ENCODE measurements at regions of chr14 and their contacts with region 1.

Region 1: DNA sequence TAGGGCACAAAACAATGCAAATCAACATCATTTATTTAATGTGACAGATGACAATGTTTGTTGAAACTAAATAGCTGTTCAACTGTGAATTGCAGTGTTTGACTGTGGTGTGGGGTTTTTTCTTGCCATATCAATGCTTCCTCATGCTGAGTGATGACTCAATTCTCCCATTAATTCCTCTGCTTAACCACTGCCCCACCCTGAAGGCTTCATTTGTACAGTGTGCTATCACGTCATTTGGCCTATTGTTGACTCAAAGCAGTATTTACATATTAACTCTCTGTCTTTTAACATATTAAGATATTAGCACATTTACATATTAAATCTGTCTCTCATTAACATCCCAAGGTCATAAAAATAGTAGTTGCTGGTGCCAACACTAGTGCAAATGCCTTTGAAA is 164.8 kb upstream of the NRXN3 start:
- DNase-seq: peak; percentile 67
- H3K4me3 Mint-ChIP-seq: no peak overlapping the region
- H3K27ac Mint-ChIP-seq: peak overlapping the region; percentile 93
- H3K4me1 Mint-ChIP-seq: peaks cover 29% of the 10 kb centered on the region
- H3K27me3 Mint-ChIP-seq: no peaks in the 10 kb centered on the region
- CTCF ChIP-seq: no peak

Region 2: DNA sequence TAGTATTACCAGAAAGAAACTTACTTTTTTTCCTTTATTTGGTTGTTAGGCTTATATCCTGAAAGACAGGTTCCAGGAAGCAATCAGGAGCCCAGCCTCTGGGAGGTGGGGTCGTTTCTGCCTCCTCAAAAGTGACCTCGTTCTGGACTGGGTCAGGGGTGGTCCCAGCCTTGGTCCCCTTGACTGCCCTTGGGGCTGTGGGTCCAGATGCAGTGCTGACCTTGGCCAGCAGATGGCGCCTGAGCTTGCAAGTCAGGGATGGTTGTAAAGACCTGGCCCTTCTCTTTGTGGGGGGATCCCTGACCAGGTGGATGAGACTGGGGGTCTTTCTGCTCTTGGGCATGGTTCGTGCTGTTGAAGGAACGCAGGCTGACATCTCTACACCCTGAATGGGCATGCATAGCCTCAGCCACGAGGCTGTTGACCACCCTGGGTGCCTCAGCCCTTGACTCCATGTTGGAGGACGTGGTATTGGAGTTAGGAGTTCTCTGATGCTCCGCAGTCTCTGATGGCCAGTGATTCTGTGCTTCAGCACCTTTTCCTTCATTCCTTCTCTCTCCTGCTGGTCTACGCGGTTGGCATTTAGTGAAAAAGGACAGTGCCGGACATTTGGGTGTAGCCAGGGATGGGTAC is 143.1 kb before region 1 on chr14:
- CTCF ChIA-PET with region 1: no interaction called
- intact Hi-C with region 1: loop called (anchors 10 kb)
- DNase-seq: peak; percentile 80
- H3K4me3 Mint-ChIP-seq: no peak overlapping the region
- H3K27ac Mint-ChIP-seq: no peak overlapping the region
- H3K4me1 Mint-ChIP-seq: peaks cover 32% of the 10 kb centered on the region
- H3K27me3 Mint-ChIP-seq: no peaks in the 10 kb centered on the region
- CTCF ChIP-seq: peak; percentile 87

Region 3: DNA sequence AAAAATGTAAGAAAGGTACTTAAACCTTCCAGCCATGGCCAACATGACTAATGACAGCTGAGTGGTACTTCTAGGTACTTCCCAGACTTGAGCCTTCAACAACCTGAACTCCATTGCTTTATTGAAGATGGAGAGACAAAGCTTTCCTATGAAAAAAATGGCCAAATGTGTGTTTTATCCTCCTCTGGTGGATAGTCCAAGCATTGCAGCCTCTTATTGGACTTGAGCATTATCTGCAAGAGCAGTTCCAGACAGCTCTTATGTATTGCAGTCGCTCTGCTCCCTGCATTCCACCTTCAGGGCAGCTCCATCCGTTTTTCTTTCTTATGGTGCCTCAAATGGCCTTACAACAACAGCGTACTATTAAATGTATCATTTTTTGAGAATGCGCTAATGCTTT is 753.0 kb after region 1 on chr14:
- CTCF ChIA-PET with region 1: no interaction called
- intact Hi-C with region 1: loop called (anchors 5 kb)
- DNase-seq: peak; percentile 35
- H3K4me3 Mint-ChIP-seq: no peak overlapping the region
- H3K27ac Mint-ChIP-seq: no peak overlapping the region
- H3K4me1 Mint-ChIP-seq: peaks cover 52% of the 10 kb centered on the region
- H3K27me3 Mint-ChIP-seq: no peaks in the 10 kb centered on the region
- CTCF ChIP-seq: peak; percentile 71

Measured in Calu3 (cell line).